B cell (primary cell): ENCODE measurements at regions of chr2 and their contacts with region 1.

Region 1: DNA sequence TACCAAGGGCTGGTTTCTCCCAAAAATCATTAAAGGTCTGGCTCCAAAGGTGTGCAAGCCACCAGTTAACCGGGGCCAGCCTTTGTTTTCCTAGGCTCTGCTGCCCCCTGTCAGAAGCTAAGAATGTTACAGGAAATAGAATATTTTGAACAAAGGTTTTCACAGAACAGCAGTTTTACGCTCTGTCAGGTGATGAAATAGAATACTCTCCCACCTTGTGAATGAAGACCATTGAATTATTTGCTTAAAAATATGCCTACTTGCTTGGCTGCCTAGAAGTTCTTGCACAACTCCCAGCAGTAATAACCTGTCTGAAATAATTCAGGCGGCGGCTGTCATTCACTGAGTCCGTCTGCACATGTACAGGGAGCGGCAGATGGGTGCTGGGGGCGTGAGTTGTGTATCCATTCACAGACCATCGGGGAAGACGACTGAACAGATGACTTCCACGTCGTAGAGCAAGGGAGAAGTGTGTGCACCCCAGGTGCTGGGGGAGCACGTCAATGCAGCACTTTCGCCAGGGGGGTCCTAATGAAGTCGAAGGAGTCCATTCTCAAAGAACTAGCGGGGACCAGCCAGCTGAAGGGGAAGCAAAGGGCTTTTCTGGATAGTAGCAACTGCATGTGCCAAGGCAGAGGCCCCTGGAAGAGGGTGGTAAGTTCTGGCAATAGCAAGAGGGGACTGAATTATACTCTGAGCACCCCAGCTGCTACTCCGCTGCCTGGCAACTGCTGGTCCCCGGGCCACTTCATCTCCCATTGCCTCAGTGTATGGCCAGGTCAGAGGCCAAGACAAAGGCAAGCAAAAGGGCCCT is 56.1 kb downstream of the SF3B1 start:
- DNase-seq: peak; percentile 73
- ATAC-seq: peak; percentile 58
- H3K4me3 ChIP-seq: no peak overlapping the region
- H3K4me3 Mint-ChIP-seq: peak overlapping the region; percentile 21
- H3K27ac ChIP-seq: no peak overlapping the region
- H3K27ac Mint-ChIP-seq: no peak overlapping the region
- H3K4me1 ChIP-seq: peaks cover 0 to 6% of the 10 kb centered on the region in 2 donors
- H3K4me1 Mint-ChIP-seq: peaks cover 17% of the 10 kb centered on the region
- H3K27me3 ChIP-seq: peaks cover 0 to 3% (median 0%) of the 10 kb centered on the region in 4 experiments
- H3K27me3 Mint-ChIP-seq: no peaks in the 10 kb centered on the region
- CTCF ChIP-seq: peak; percentile 85

Region 2: DNA sequence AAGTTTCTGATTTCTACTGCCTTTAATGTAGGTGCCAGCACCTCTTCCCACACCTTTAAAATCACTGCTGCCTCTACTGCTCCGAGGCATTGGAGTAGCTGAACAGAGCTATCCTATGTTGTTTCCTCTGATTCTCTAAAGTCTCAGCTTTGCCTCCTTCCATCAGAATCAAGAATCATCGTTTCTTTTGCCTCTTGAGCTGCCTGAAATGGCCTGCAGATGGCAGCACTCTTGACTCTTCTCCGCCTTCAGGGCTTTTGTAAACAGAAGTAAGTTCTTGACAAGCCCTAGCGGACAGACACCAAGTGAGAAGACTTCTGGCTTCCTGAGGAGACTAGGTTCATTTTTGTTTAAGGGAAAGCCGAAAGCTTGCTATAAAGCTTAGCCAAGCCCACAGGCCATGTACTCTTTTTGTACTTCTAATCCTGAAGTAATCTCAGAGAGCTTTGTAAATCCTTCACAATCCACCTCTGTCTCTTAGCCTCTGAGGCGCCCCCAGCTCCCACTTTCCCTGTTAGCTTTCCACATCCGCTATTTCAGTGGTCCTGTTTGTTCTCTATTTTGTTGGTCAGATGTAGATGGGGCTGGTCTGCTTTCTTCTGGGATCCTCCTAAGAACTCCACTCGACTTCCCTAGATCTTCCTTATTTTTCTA is 627.6 kb before region 1 on chr2:
- CTCF ChIA-PET with region 1: interaction called, 15 read pairs
- POLR2A ChIA-PET with region 1: no interaction called
- intact Hi-C with region 1: loop called (anchors 1 kb)
- DNase-seq: peak; percentile 71
- ATAC-seq: peak; percentile 85
- H3K4me3 ChIP-seq: no peak overlapping the region
- H3K4me3 Mint-ChIP-seq: no peak overlapping the region
- H3K27ac ChIP-seq: no peak overlapping the region
- H3K27ac Mint-ChIP-seq: no peak overlapping the region
- H3K4me1 ChIP-seq: peaks cover 0 to 3% of the 10 kb centered on the region in 2 donors
- H3K4me1 Mint-ChIP-seq: peaks cover 4% of the 10 kb centered on the region
- H3K27me3 ChIP-seq: no peaks in the 10 kb centered on the region
- H3K27me3 Mint-ChIP-seq: no peaks in the 10 kb centered on the region
- CTCF ChIP-seq: peak; percentile 89

Region 3: DNA sequence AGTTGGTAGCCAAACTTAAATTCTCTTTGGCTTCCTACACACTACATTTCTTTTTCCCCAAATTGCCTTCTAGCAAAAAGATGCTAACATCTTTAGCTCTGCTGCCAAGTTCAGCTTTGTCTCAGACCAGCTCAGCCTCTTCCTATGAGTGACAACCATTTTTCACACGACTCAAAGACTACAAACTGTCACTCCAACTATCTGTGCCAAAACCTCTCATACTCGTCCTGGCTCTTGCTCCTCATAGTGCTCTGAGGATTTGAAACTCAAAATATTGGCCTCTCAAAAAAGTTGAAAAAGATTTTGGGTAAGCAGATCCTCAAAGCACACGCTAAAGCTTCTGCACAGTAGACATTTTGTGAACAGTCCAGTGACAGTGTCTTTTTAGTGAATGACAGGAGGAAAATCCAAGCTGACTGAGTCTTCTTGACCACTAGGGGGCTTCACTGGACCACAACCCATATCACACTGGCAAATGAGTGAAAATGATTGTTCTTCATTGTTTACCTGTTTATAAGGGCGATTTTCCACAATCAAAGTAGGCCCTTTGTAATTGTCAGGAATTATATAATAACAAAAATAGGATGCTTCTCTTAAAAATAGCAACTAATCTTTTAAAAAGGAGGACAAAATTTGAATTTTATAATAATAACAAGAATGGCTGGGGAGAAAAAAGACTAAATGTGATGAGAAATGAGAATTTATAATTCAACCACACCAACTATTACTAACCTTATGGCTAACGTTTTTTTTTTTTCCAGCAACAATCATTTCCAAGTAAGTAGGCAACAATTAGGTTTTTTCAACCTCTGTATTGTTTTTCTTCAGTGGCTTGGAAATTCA is 366.7 kb before region 1 on chr2:
- CTCF ChIA-PET with region 1: interaction called, 17 read pairs
- POLR2A ChIA-PET with region 1: no interaction called
- intact Hi-C with region 1: loop called (anchors 1 kb)
- DNase-seq: peak; percentile 55
- ATAC-seq: peak; percentile 54
- H3K4me3 ChIP-seq: no peak overlapping the region
- H3K4me3 Mint-ChIP-seq: no peak overlapping the region
- H3K27ac ChIP-seq: peak overlapping the region in 1 of 2 donors; percentile 51
- H3K27ac Mint-ChIP-seq: peak overlapping the region; percentile 50
- H3K4me1 ChIP-seq: no peaks in the 10 kb centered on the region
- H3K4me1 Mint-ChIP-seq: no peaks in the 10 kb centered on the region
- H3K27me3 ChIP-seq: no peaks in the 10 kb centered on the region
- H3K27me3 Mint-ChIP-seq: no peaks in the 10 kb centered on the region
- CTCF ChIP-seq: peak; percentile 83

Region 4: GRCh38 chr2:197079832-197080555 is 298.7 kb before region 1 on chr2:
- CTCF ChIA-PET with region 1: no interaction called
- POLR2A ChIA-PET with region 1: no interaction called
- intact Hi-C with region 1: loop called (anchors 10 kb)
- DNase-seq: no peak
- ATAC-seq: no peak
- H3K4me3 ChIP-seq: no peak overlapping the region
- H3K4me3 Mint-ChIP-seq: no peak overlapping the region
- H3K27ac ChIP-seq: peak overlapping the region in 1 of 2 donors; percentile 9
- H3K27ac Mint-ChIP-seq: peak overlapping the region; percentile 7
- H3K4me1 ChIP-seq: no peaks in the 10 kb centered on the region
- H3K4me1 Mint-ChIP-seq: no peaks in the 10 kb centered on the region
- H3K27me3 ChIP-seq: no peaks in the 10 kb centered on the region
- H3K27me3 Mint-ChIP-seq: no peaks in the 10 kb centered on the region
- CTCF ChIP-seq: no peak

Region 5: GRCh38 chr2:197322724-197323720 is 55.7 kb before region 1 on chr2:
- CTCF ChIA-PET with region 1: interaction called, 3 read pairs
- POLR2A ChIA-PET with region 1: no interaction called
- intact Hi-C with region 1: loop called (anchors 5 kb)
- DNase-seq: peak; percentile 25
- ATAC-seq: peak; percentile 60
- H3K4me3 ChIP-seq: peak overlapping the region in 1 of 5 experiments; percentile 6
- H3K4me3 Mint-ChIP-seq: peak overlapping the region; percentile 70
- H3K27ac ChIP-seq: peak overlapping the region; percentile 14 to 27
- H3K27ac Mint-ChIP-seq: peak overlapping the region; percentile 83
- H3K4me1 ChIP-seq: peaks cover 24 to 35% of the 10 kb centered on the region in 2 donors
- H3K4me1 Mint-ChIP-seq: peaks cover 39% of the 10 kb centered on the region
- H3K27me3 ChIP-seq: no peaks in the 10 kb centered on the region
- H3K27me3 Mint-ChIP-seq: no peaks in the 10 kb centered on the region
- CTCF ChIP-seq: no peak

Region 6: DNA sequence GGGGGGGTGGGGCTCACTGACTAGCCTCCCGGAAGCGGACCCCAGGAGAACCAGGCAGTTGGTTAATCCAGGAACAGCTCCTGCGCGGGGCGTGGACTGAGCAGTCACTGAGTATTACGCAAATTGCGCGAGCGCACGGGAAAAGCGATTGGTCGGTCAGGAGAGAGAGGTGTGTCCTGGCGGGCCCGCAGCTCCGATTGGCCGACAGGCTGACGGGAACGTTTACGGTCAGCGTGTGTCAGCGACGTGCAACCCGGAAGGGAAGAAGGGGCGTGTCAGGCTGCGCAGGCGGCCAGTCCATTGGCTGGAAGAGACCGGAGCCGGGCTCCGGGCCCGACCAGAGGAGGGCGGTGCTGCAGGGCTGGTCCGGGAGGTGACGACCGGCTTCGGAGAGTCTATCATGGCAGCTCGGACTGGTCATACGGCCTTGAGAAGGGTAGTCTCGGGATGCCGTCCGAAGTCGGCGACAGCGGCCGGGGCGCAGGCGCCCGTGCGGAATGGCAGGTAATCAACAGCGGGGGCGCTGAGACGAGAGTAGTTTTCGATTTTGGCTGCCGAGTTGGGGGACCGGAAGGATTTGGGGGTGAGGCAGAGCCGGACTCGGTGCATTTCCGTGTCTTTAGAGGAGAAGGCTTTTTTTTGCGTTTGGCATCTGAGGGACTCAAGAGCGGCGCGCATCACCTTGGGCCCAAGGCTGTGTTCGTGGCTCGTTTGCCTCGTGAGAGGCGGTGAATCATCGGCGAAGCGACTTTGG is 74.6 kb after region 1 on chr2 and contains the start of gene COQ10B:
- CTCF ChIA-PET with region 1: no interaction called
- POLR2A ChIA-PET with region 1: no interaction called
- intact Hi-C with region 1: no loop called
- DNase-seq: peak; percentile 99
- ATAC-seq: peak; percentile 90
- H3K4me3 ChIP-seq: peak within 1 kb of the TSS; percentile 82 to 99 (median 89)
- H3K4me3 Mint-ChIP-seq: peak within 1 kb of the TSS; percentile 99
- H3K27ac ChIP-seq: peak within 1 kb of the TSS; percentile 95 to 96
- H3K27ac Mint-ChIP-seq: peak within 1 kb of the TSS; percentile 99
- H3K4me1 ChIP-seq: peaks cover 17 to 19% of the 10 kb centered on the region in 2 donors
- H3K4me1 Mint-ChIP-seq: peaks cover 42% of the 10 kb centered on the region
- H3K27me3 ChIP-seq: no peaks in the 10 kb centered on the region
- H3K27me3 Mint-ChIP-seq: no peaks in the 10 kb centered on the region
- CTCF ChIP-seq: no peak
- total RNA-seq, gene COQ10B: 29.1 and 29.6 TPM in 2 replicates